ENCODE measurements at regions of chr5 and their contacts with region 1.

Region 1: GRCh38 chr5:154368041-154368800 is 77.6 kb upstream of the SAP30L start:
- DNase-seq: peak; percentile 95
- ATAC-seq: peak; percentile 70
- H3K4me3 ChIP-seq: no peak overlapping the region
- H3K27ac ChIP-seq: peak overlapping the region; percentile 78; the same call in 1 of the 2 replicates
- H3K4me1 ChIP-seq: peaks cover 36% of the 10 kb centered on the region
- H3K27me3 ChIP-seq: no peaks in the 10 kb centered on the region
- CTCF ChIP-seq: no peak
- POLR2A ChIP-seq: no peak; the same call in 1 of the 2 replicates
- RAD21 ChIP-seq: no peak

Region 2: GRCh38 chr5:154287136-154287535 is 81.1 kb before region 1 on chr5:
- CTCF ChIA-PET with region 1: no interaction called
- POLR2A ChIA-PET with region 1: no interaction called
- dilution Hi-C with region 1: no loop called
- in situ Hi-C with region 1: no loop called
- intact Hi-C with region 1: loop called (anchors 5 kb)
- DNase-seq: peak; percentile 87
- ATAC-seq: peak; percentile 69
- H3K4me3 ChIP-seq: no peak overlapping the region
- H3K27ac ChIP-seq: no peak overlapping the region
- H3K4me1 ChIP-seq: peaks cover 18% of the 10 kb centered on the region
- H3K27me3 ChIP-seq: no peaks in the 10 kb centered on the region
- CTCF ChIP-seq: no peak
- POLR2A ChIP-seq: no peak
- RAD21 ChIP-seq: no peak